Ovary (tissue), 10 donors: ENCODE measurements at regions of chr14 and their contacts with region 1.

Region 1: DNA sequence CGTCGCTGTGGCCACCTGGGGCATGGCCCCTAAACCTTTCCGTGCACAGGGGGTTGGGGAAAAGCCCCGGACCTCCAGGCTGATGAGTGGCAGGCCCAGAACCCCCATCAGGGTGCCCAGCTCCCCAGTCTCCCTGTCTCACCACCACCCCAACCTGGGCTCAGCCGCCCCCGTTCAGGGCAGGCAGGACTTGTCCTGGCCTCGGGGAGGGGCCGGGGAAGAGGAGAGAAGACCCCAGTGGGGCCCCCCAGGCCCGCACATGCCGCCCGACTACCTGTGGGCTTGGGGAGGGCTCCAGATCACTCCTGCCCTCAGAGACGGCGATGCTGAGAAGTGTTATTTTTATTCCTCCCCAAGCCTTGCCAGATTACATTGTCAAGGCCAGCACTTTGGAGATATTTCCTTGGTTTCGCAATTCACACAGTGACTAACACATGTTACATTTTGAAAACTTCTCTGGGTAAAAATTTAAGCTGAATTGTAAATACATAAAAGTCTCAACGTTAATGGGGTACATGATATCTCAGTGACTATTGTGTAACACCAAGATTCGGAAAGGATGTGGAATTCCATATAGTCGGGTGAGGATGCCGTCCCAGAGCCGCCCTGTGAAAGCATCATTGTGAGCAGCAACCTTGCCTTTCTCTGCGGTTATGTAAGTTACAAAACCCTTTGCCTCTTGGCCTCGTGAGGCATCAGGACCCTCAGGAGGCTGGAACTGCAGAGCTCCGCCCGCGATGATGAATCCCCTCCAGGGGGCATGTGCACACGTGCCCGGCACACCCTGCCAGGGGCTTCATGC is 85.6 kb upstream of the DIO3 start:
- DNase-seq: peak; percentile 72 to 82 (median 75)
- H3K4me3 ChIP-seq: peak overlapping the region; percentile 29
- H3K27ac ChIP-seq: peak overlapping the region; percentile 45 to 97
- H3K4me1 ChIP-seq: peaks cover 20% of the 10 kb centered on the region
- H3K27me3 ChIP-seq: no peaks in the 10 kb centered on the region
- CTCF ChIP-seq: no peak
- EP300 ChIP-seq: no peak
- POLR2A ChIP-seq: peak; percentile 48

Region 2: GRCh38 chr14:101359221-101360053 is 116.2 kb before region 1 on chr14:
- intact Hi-C with region 1: loop called in 2 of 4 experiments (anchors 5 to 10 kb)
- DNase-seq: peak; percentile 66 to 77 (median 71)
- H3K4me3 ChIP-seq: no peak overlapping the region
- H3K27ac ChIP-seq: peak overlapping the region; percentile 9 to 94
- H3K4me1 ChIP-seq: peaks cover 48% of the 10 kb centered on the region
- H3K27me3 ChIP-seq: no peaks in the 10 kb centered on the region
- CTCF ChIP-seq: no peak
- EP300 ChIP-seq: no peak
- POLR2A ChIP-seq: no peak

Region 3: GRCh38 chr14:101364503-101365328 is 110.9 kb before region 1 on chr14:
- intact Hi-C with region 1: loop called in 3 of 4 experiments (anchors 5 to 10 kb)
- DNase-seq: peak; percentile 87 to 97 (median 94)
- H3K4me3 ChIP-seq: no peak overlapping the region
- H3K27ac ChIP-seq: peak overlapping the region; percentile 67 to 94
- H3K4me1 ChIP-seq: peaks cover 47% of the 10 kb centered on the region
- H3K27me3 ChIP-seq: no peaks in the 10 kb centered on the region
- CTCF ChIP-seq: peak in 1 of 3 donors; percentile 7
- EP300 ChIP-seq: peak; percentile 87
- POLR2A ChIP-seq: peak; percentile 52

Region 4: GRCh38 chr14:101535232-101535631 is 59.6 kb after region 1 on chr14:
- intact Hi-C with region 1: no loop called
- DNase-seq: no peak
- H3K4me3 ChIP-seq: no peak overlapping the region
- H3K27ac ChIP-seq: no peak overlapping the region
- H3K4me1 ChIP-seq: no peaks in the 10 kb centered on the region
- H3K27me3 ChIP-seq: no peaks in the 10 kb centered on the region
- CTCF ChIP-seq: no peak
- EP300 ChIP-seq: no peak
- POLR2A ChIP-seq: no peak